ENCODE measurements at regions of chr5 and their contacts with region 1.

Region 1: DNA sequence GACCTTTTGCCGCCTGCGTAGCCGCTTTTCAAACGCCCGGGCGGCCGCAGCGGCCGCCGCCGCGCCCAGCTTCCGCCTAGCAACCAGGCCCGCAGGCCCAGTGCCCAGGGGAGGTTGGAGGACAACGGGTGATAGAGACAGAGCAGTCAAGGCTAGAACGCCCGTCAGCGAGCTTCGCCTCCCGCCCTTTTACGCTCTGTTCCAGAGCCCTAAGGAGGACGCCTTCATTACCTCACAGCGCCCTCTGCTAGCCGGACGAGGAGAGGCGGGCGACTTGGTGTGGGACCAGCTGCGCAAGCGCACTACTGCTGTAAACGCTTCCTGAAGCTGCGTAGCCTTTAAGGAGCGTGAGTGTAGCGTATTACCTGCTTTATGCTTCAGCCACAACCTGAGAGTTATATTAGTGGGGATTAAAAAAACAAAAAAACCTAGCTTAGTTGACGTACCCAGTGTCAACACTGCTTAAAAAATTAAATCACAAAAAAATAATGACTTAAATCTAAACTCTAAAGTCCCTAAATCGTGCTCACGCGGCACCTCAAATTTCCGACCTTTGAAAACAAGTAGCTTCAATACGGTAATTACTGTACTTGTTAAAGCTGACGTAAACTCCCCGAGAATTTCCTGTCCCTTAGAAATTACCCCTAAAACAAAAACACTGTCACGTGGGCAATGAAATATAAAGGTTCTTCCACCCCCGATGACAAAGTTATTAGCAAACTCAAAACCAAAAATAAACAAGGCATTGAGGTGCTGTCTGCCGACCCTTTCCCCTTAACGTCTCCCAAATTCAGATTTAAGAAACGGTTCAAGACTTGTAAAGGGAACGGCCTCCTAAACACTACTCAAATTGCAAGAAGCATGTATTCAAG is at the start of gene CEP120:
- DNase-seq: peak; percentile 93
- H3K4me3 ChIP-seq: peak within 1 kb of the TSS; percentile 74 to 96 (median 86)
- H3K27ac ChIP-seq: peak within 1 kb of the TSS; percentile 92 to 95 (median 94)
- H3K4me1 ChIP-seq: peaks cover 8 to 45% (median 10%) of the 10 kb centered on the region in 3 donors
- H3K27me3 ChIP-seq: no peaks in the 10 kb centered on the region
- CTCF ChIP-seq: peak; percentile 54 to 90 (median 84)
- POLR2A ChIP-seq: peak in 3 of 4 donors; percentile 70 to 91 (median 78)
- total RNA-seq, gene CEP120: 7.9 to 12.6 (median 10.1) TPM

Region 2: DNA sequence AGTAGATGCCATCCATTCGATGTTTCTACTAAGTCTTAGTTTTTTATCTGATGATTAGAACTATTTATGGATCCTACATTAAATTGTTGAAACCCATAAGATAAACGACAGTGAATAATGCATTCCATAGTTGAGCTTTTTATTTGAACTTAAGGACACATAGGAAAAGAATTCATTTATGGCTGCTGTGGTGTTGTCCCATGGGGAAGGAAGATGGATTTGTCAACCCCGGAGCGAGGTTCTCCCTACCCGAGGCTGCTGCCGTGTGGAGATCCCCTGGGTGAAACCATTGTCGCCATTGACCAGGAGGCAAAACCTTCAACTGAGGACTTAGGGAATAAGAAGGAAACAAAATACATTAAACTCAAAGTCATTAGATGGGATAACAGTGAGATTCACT is 187.7 kb before region 1 on chr5:
- intact Hi-C with region 1: no loop called
- DNase-seq: no peak
- H3K4me3 ChIP-seq: no peak overlapping the region
- H3K27ac ChIP-seq: no peak overlapping the region
- H3K4me1 ChIP-seq: no peaks in the 10 kb centered on the region
- H3K27me3 ChIP-seq: no peaks in the 10 kb centered on the region
- CTCF ChIP-seq: no peak
- POLR2A ChIP-seq: no peak

Region 3: GRCh38 chr5:123511648-123512605 is 88.4 kb after region 1 on chr5 and contains the start of gene CSNK1G3:
- intact Hi-C with region 1: loop called (anchors 5 kb)
- DNase-seq: peak; percentile 83
- H3K4me3 ChIP-seq: peak within 1 kb of the TSS; percentile 84 to 97 (median 90)
- H3K27ac ChIP-seq: peak within 1 kb of the TSS; percentile 91 to 98 (median 96)
- H3K4me1 ChIP-seq: peaks cover 0 to 39% (median 20%) of the 10 kb centered on the region in 3 donors
- H3K27me3 ChIP-seq: no peaks in the 10 kb centered on the region
- CTCF ChIP-seq: peak in 1 of 6 experiments; percentile 5
- POLR2A ChIP-seq: peak in 3 of 4 donors; percentile 77 to 96 (median 81)
- total RNA-seq, gene CSNK1G3: 17.4 to 82.6 (median 42.5) TPM

Measured in esophagus squamous epithelium (tissue), 5 donors.